ENCODE measurements at regions of chr17 and their contacts with region 1.

Region 1: GRCh38 chr17:49290690-49291359 is 60.2 kb upstream of the PHOSPHO1 start:
- DNase-seq: peak; percentile 50
- H3K4me3 ChIP-seq: no peak overlapping the region
- H3K27ac ChIP-seq: no peak overlapping the region
- H3K4me1 ChIP-seq: no peaks in the 10 kb centered on the region
- H3K27me3 ChIP-seq: no peaks in the 10 kb centered on the region
- CTCF ChIP-seq: peak; percentile 88
- EP300 ChIP-seq: no peak
- RAD21 ChIP-seq: peak; percentile 66

Region 2: GRCh38 chr17:49260011-49260921 is 30.6 kb before region 1 on chr17:
- CTCF ChIA-PET with region 1: interaction called, 20 read pairs
- POLR2A ChIA-PET with region 1: no interaction called
- DNase-seq: peak; percentile 81
- H3K4me3 ChIP-seq: peak overlapping the region; percentile 49 to 58
- H3K27ac ChIP-seq: peak overlapping the region in 1 of 2 experiments; percentile 46; a peak in 2 of 4 replicates
- H3K4me1 ChIP-seq: peaks cover 4% of the 10 kb centered on the region in 2 experiments; a peak in 1 of 4 replicates
- H3K27me3 ChIP-seq: no peaks in the 10 kb centered on the region
- CTCF ChIP-seq: no peak
- EP300 ChIP-seq: no peak
- RAD21 ChIP-seq: no peak

Region 3: DNA sequence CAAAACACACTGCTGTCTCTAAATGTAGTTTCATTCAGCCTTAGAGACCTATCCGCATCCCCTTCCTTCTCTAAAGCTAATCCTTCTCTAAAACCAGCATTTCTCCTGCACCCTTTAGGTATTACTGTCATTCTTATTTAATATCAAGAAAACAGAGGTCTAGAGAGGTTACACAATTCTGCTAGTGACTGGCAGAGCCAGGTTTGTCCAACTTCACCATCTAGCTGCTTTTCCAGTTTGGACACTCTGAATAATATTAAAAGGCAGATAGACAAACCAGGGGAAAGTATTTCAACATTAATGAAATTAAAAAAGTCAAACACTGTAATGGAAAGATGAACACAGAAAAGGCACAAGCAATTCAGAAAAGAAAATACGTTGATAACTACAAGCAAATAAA is 15.1 kb after region 1 on chr17:
- CTCF ChIA-PET with region 1: interaction called, 13 read pairs
- POLR2A ChIA-PET with region 1: no interaction called
- DNase-seq: no peak
- H3K4me3 ChIP-seq: no peak overlapping the region
- H3K27ac ChIP-seq: no peak overlapping the region
- H3K4me1 ChIP-seq: no peaks in the 10 kb centered on the region
- H3K27me3 ChIP-seq: no peaks in the 10 kb centered on the region
- CTCF ChIP-seq: no peak
- EP300 ChIP-seq: no peak
- RAD21 ChIP-seq: no peak

Measured in SK-N-SH (cell line).